H1 (cell line): ENCODE measurements at regions of chr1 and their contacts with region 1.

Region 1: DNA sequence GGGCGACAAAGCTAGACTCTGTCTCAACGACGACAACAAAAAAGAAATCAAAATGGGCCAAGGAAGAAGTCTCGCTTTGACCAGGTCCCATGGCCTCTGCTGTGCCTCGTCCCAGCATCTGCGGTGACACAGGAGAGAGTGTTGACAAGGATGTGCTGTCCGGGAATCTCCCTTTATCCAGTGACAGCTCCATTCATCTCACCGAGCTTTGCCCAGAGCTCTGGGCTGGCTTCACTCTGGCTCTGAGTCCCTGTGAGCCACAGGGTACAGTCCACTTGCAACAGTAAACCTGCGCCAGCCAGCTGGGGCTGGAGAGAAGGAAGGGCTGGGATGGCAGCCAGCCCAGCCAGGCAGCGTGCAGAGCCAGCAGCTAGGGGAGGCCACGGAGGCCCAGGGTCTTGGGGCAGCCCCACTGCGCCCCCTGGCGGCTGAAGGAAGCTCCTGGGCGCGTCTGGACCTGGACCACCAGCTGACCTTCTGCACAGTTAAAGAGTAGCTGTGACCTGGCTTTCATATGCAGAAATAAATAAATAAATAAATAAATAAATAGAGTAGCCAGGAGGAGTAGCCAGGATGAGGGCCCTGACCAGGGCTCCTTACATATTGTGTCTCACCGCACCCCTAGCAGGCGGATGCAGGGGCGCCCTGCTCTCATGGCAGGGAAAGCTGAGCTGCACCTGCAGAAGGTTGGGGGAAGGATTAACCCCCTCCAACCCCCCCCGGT is 29.7 kb downstream of the ENO1 start:
- DNase-seq: peak; percentile 69 to 96
- H3K4me3 ChIP-seq: no peak overlapping the region
- H3K27ac ChIP-seq: no peak overlapping the region
- H3K4me1 ChIP-seq: peaks cover 0 to 4% (median 0%) of the 10 kb centered on the region in 4 experiments; a peak in 2 of 7 replicates
- H3K27me3 ChIP-seq: no peaks in the 10 kb centered on the region
- CTCF ChIP-seq: peak; percentile 88 to 99 (median 98)
- EP300 ChIP-seq: no peak
- POLR2A ChIP-seq: no peak
- RAD21 ChIP-seq: peak; percentile 88 to 93

Region 2: DNA sequence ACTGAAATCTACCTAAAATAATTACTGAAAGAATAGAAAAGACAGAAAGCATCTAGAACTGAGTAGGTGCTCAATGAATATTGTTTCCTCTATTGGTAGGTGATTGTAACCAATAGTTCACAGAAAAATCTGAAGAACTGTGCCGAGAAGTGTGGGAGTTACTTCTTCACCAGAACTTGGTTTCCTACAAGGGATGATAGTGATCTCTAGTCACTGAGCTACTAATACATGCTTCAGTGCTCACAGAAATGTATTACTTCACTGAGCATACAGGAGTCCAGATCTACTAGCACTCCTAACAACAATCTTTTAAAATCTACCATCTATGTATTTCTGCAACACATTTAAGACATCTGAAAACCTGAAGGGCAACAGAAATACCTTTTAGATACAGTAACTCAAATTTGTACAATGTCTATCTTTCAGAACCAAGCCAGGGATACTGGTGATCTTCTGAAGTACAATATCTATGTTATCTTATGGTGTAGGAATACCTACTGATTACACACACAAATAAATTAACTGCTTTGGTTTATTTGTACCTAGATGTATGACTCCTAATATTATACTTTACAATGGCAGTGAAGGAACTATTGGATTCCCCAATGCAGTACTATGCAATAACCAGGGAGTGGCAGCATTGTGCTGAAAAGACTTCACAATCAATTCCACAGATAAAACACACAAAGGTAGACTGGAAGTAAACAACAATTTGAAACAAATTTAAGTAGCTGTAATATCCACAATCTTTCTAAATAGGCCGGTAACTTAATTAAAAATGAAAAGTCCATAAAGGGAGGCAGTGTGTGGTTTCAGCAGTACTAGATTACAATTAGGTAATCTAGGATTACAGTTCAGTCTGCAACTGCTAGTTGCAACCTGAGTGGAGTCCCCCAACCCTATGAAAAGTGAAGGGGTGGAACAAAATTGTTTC is 287.9 kb before region 1 on chr1:
- CTCF ChIA-PET with region 1: interaction called, 14 read pairs
- POLR2A ChIA-PET with region 1: no interaction called
- DNase-seq: no peak
- H3K4me3 ChIP-seq: no peak overlapping the region
- H3K27ac ChIP-seq: no peak overlapping the region
- H3K4me1 ChIP-seq: peaks cover 0 to 6% (median 3%) of the 10 kb centered on the region in 4 experiments; a peak in 2 of 7 replicates
- H3K27me3 ChIP-seq: no peaks in the 10 kb centered on the region
- CTCF ChIP-seq: peak in 2 of 3 experiments; percentile 66 to 72; a peak in 2 of 4 replicates
- EP300 ChIP-seq: no peak
- POLR2A ChIP-seq: no peak
- RAD21 ChIP-seq: peak; percentile 86 to 87

Region 3: DNA sequence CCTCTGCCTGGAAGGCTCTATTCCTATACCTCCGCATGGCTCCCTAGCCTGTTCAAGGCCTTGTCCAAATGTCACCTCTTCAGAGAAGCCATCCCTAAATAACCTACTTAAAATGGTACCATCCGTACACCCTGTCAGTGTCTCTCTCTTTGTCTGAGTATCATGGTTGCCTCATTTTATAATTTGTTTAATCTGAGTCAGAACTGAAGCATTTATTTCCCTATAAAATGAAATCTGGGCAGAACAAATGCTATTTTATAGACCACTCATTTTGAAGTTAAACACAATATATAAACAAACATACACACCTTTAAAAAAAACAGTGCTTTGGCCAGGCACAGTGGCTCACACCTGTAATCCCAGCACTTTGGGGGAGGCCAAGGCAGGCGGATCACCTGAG is 61.6 kb before region 1 on chr1:
- CTCF ChIA-PET with region 1: interaction called, 13 read pairs
- POLR2A ChIA-PET with region 1: interaction called, 5 read pairs
- DNase-seq: no peak
- H3K4me3 ChIP-seq: no peak overlapping the region
- H3K27ac ChIP-seq: no peak overlapping the region
- H3K4me1 ChIP-seq: peaks cover 5 to 18% (median 11%) of the 10 kb centered on the region in 4 experiments
- H3K27me3 ChIP-seq: no peaks in the 10 kb centered on the region
- CTCF ChIP-seq: no peak
- EP300 ChIP-seq: no peak
- POLR2A ChIP-seq: no peak
- RAD21 ChIP-seq: no peak

Region 4: GRCh38 chr1:8825985-8826481 is 22.8 kb before region 1 on chr1:
- CTCF ChIA-PET with region 1: interaction called, 25 read pairs
- POLR2A ChIA-PET with region 1: interaction called, 5 read pairs
- DNase-seq: no peak
- H3K4me3 ChIP-seq: no peak overlapping the region
- H3K27ac ChIP-seq: no peak overlapping the region
- H3K4me1 ChIP-seq: peaks cover 0 to 3% (median 1%) of the 10 kb centered on the region in 4 experiments; a peak in 2 of 7 replicates
- H3K27me3 ChIP-seq: no peaks in the 10 kb centered on the region
- CTCF ChIP-seq: no peak
- EP300 ChIP-seq: no peak
- POLR2A ChIP-seq: no peak
- RAD21 ChIP-seq: no peak

Region 5: DNA sequence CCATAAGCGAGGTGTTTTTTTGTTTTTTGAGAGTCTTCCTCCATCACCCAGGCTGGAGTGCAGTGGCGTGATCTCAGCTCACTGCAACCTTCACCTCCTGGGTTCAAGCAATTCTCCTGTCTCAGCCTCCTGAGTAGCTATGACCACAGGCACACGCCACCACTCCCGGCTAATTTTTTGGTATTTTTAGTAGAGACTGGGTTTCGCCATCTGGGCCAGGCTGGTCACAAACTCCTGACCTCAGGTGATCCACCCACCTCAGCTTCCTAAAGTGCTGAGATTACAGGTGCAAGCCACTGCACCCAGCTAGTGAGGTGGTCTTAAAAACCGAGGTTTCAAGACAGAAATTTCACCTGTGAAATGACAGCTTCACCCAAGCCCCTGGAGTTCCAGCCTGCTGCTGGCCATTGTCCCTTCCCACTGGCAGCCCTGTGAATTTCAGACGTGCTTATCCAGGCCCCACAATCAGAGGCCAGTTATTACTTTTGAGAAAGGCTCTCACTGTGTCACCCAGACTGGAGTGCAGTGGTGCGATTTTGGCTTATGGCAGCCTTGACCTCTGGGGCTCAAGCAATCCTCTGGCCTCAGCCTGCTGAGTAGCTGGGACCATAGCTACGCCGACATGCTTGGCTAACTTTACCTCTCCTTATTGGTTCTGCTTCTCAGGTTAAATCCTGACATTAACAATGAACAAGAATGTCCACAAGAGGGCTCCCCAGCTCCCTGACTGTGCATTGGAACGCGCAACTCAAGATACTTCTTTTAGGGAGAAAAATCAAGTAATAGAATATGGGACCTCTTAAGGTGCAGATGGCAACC is 10.3 kb after region 1 on chr1:
- CTCF ChIA-PET with region 1: interaction called, 128 read pairs
- POLR2A ChIA-PET with region 1: interaction called, 880 read pairs
- DNase-seq: no peak
- H3K4me3 ChIP-seq: no peak overlapping the region
- H3K27ac ChIP-seq: no peak overlapping the region
- H3K4me1 ChIP-seq: peaks cover 2 to 6% (median 3%) of the 10 kb centered on the region in 4 experiments; a peak in 6 of 7 replicates
- H3K27me3 ChIP-seq: no peaks in the 10 kb centered on the region
- CTCF ChIP-seq: peak in 2 of 3 experiments; percentile 61 to 72; a peak in 3 of 4 replicates
- EP300 ChIP-seq: no peak
- POLR2A ChIP-seq: peak; percentile 23 to 31; a peak in 2 of 3 replicates
- RAD21 ChIP-seq: peak; percentile 48 to 62; a peak in 3 of 4 replicates